ENCODE measurements at regions of chr17 and their contacts with region 1.

Region 1: DNA sequence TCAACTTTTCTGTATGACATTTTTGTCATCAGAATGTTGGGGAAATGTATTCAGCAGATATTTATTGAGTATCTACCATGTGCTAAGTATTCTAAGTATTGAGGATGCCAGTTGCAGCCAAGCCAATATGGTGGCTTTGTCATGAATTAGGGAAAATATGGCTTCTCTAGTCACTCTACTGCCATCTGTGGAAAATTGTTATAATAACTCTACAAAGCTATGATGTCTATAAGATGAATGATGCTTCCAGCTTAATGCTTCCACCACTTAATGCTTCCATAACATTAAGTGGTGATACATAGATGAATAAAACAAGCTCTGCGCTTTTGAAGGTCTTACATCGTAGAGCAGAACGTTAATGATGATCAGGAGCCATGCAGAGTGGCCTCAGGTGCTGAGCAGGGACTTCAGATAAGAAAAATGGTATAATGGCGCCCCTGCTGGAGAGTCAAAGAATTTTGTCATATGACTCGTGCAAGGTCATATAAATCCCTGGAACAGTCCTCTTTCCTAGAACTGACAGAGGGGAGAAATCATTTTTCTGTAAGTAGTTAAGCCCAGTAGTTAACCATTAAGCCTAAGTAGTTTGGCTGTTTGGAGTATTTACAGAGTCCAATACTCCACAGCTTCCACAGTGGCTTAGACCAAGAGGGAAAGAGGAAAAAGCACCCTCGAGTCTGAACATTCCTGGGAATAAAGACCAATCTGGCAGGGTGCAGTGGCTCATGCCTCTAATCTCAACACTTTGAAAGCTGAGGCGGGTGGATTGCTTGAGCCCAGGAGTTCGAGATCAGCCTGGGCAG is 2.7 kb upstream of the TMIGD1 start:
- DNase-seq: peak; percentile 78
- ATAC-seq: peak; percentile 56
- H3K4me3 Mint-ChIP-seq: no peak overlapping the region
- H3K27ac Mint-ChIP-seq: no peak overlapping the region
- H3K4me1 Mint-ChIP-seq: peaks cover 36% of the 10 kb centered on the region
- H3K27me3 Mint-ChIP-seq: peaks cover 2% of the 10 kb centered on the region

Region 2: GRCh38 chr17:29962656-29963055 is 373.9 kb before region 1 on chr17:
- CTCF ChIA-PET with region 1: no interaction called
- POLR2A ChIA-PET with region 1: no interaction called
- DNase-seq: no peak
- ATAC-seq: no peak
- H3K4me3 Mint-ChIP-seq: no peak overlapping the region
- H3K27ac Mint-ChIP-seq: no peak overlapping the region
- H3K4me1 Mint-ChIP-seq: no peaks in the 10 kb centered on the region
- H3K27me3 Mint-ChIP-seq: peaks cover 8% of the 10 kb centered on the region

Region 3: DNA sequence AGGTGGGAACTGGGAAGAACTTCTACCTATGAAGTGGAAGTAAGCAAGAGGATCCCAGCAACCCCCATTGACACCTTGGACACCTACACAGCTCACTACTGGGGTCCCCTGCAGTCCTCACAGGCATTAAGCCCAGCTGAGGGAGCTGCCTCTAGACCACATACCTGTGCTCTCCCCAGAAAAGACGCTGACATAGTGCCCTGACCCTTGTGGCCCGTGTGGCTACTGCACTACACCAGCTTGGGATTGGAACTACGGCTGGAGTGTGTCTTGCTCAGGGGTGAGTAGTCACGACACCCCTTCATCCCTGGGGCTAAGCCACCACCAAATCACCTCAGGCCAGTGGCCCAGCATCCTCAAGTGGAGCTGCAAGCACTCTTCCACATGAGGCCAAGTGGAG is 274.2 kb before region 1 on chr17:
- CTCF ChIA-PET with region 1: no interaction called
- POLR2A ChIA-PET with region 1: no interaction called
- DNase-seq: no peak
- ATAC-seq: no peak
- H3K4me3 Mint-ChIP-seq: no peak overlapping the region
- H3K27ac Mint-ChIP-seq: no peak overlapping the region
- H3K4me1 Mint-ChIP-seq: no peaks in the 10 kb centered on the region
- H3K27me3 Mint-ChIP-seq: peaks cover 19% of the 10 kb centered on the region

Region 4: DNA sequence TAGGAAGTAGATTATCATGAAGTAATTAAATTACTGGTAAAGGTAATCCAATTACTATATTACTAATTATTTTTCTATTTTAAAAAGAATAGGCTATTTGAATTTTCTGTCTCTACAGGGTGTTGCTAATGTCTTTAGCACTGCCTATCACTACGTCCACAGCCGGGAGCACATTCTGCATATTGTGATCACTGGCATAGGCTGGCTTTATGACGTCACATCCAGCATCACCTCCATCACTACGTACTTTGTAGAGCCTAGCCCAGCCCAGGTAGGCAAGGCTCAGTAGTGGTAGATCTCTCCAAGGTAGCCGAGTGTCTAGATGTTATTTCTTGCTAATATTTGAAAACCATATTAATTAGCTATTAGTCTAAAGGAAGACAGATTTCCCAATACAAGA is 253.8 kb before region 1 on chr17:
- CTCF ChIA-PET with region 1: no interaction called
- POLR2A ChIA-PET with region 1: no interaction called
- DNase-seq: no peak
- ATAC-seq: no peak
- H3K4me3 Mint-ChIP-seq: no peak overlapping the region
- H3K27ac Mint-ChIP-seq: no peak overlapping the region
- H3K4me1 Mint-ChIP-seq: no peaks in the 10 kb centered on the region
- H3K27me3 Mint-ChIP-seq: peaks cover 17% of the 10 kb centered on the region

Region 5: DNA sequence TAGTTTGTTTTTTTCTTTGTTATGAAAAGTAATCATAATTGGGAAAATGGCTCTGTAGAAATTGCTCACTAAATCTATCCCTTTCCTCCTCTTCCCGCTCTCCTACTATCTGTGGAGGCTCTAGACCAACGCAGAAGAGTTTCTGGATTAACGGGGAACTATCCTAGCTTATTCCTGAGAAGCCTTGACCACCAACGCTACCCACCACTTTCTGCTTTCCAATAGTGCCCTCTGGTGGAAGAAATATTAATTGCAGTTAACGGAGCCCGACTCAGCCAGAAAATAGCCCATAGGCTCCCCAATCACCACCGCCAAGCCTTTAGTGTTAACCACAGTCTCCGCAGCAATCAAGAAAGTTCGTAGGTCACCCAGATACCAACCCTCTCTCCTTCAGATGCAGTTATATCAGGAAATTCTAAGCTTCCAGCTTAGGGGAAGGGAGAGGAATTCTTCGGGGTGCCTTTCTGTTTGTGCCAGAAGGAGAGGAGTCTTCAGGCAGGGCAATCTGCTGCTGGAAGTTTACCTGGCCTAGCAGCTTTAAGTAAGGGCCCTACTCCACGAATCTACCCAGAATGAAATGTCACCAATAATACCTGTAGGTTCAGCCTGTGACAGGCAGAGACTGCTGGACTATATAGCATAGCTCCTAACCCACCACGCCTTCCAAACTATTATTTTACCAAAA is 243.0 kb before region 1 on chr17:
- CTCF ChIA-PET with region 1: interaction called, 22 read pairs
- POLR2A ChIA-PET with region 1: no interaction called
- DNase-seq: peak; percentile 59
- ATAC-seq: peak; percentile 70
- H3K4me3 Mint-ChIP-seq: no peak overlapping the region
- H3K27ac Mint-ChIP-seq: no peak overlapping the region
- H3K4me1 Mint-ChIP-seq: peaks cover 7% of the 10 kb centered on the region
- H3K27me3 Mint-ChIP-seq: peaks cover 31% of the 10 kb centered on the region

Region 6: GRCh38 chr17:30124273-30124796 is 212.2 kb before region 1 on chr17:
- CTCF ChIA-PET with region 1: interaction called, 118 read pairs
- POLR2A ChIA-PET with region 1: no interaction called
- DNase-seq: no peak
- ATAC-seq: no peak
- H3K4me3 Mint-ChIP-seq: no peak overlapping the region
- H3K27ac Mint-ChIP-seq: no peak overlapping the region
- H3K4me1 Mint-ChIP-seq: peaks cover 31% of the 10 kb centered on the region
- H3K27me3 Mint-ChIP-seq: no peaks in the 10 kb centered on the region

Region 7: DNA sequence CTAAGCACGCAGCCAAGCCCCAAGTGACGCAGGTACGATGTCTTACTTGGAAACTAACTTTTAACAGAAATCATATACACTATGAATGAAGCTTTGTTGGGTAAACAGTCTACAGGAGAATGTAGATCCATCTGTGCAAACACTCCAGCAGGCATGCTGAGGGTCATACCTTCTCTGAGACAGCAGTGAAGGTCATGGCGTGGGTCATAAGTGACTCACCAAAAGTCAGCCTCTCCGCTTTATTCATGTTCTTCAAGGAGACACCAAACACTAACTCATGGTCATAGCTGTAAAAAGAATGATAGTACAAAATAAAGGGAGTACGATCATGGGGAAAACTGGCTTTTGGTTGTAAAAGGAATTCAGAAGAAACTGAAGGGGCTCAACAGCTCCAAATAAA is 65.5 kb before region 1 on chr17:
- CTCF ChIA-PET with region 1: interaction called, 11 read pairs
- POLR2A ChIA-PET with region 1: no interaction called
- DNase-seq: no peak
- ATAC-seq: no peak
- H3K4me3 Mint-ChIP-seq: no peak overlapping the region
- H3K27ac Mint-ChIP-seq: no peak overlapping the region
- H3K4me1 Mint-ChIP-seq: peaks cover 4% of the 10 kb centered on the region
- H3K27me3 Mint-ChIP-seq: no peaks in the 10 kb centered on the region

Region 8: GRCh38 chr17:30315106-30315505 is 21.5 kb before region 1 on chr17:
- CTCF ChIA-PET with region 1: interaction called, 17 read pairs
- POLR2A ChIA-PET with region 1: no interaction called
- DNase-seq: no peak
- ATAC-seq: no peak
- H3K4me3 Mint-ChIP-seq: no peak overlapping the region
- H3K27ac Mint-ChIP-seq: no peak overlapping the region
- H3K4me1 Mint-ChIP-seq: no peaks in the 10 kb centered on the region
- H3K27me3 Mint-ChIP-seq: peaks cover 17% of the 10 kb centered on the region

Region 9: DNA sequence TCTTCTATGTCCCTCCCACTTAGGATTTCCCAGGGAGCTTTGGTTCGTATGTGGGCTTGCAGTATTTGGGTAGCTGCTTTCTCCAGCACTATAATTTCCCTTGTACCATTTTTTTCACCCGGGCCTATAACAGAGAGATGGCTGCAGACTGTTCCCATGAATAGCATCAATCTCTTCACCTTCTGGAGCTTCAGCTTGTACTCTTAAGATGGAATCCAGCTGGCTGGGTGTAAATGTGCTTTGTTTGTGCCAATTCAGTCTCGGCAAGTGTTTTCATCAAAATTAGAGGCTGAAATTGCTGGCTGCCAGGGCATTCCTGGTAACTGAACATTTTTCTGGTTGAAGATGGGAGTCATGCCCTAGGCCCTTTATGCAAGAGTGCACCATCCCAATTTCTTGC is 30.0 kb after region 1 on chr17:
- CTCF ChIA-PET with region 1: interaction called, 12 read pairs
- POLR2A ChIA-PET with region 1: no interaction called
- DNase-seq: no peak
- ATAC-seq: no peak
- H3K4me3 Mint-ChIP-seq: no peak overlapping the region
- H3K27ac Mint-ChIP-seq: no peak overlapping the region
- H3K4me1 Mint-ChIP-seq: peaks cover 38% of the 10 kb centered on the region
- H3K27me3 Mint-ChIP-seq: no peaks in the 10 kb centered on the region

Measured in activated CD8-positive, alpha-beta T cell treated with anti-CD3 and anti-CD28 coated beads, Interleukin-2, amount 10 ng/mL, durations not matched to agents 7 days and 5 days (primary cell).